Astrocyte of the cerebellum (primary cell): ENCODE measurements at regions of chr3 and their contacts with region 1.

Region 1: GRCh38 chr3:147391781-147392624 is 14.3 kb downstream of the ZIC4 start:
- DNase-seq: peak; percentile 86
- H3K4me3 ChIP-seq: peak overlapping the region; percentile 82
- CTCF ChIP-seq: peak; percentile 44

Region 2: DNA sequence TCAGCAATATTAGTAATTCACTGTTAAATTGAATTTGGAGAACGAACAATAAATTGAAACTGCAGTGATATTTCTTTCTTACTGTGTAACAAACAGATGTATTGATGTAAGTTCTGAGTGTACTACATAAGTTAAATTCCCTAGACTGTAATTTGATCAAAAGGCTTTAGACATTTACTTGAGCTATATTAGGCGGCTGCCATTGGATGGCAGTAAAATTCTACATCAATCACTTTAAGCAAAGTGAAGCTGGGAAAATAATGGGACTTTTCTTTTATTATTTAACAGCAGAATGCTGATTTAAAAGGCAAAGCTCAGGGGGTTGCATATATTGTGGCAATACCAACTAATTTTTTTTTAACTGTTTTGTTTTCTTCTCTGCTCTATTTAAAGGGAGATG is 574.3 kb before region 1 on chr3:
- in situ Hi-C with region 1: loop called (anchors 25 kb)
- DNase-seq: peak; percentile 64
- H3K4me3 ChIP-seq: no peak overlapping the region
- CTCF ChIP-seq: peak; percentile 51

Region 3: GRCh38 chr3:147462856-147463255 is 70.9 kb after region 1 on chr3:
- in situ Hi-C with region 1: no loop called
- DNase-seq: no peak
- H3K4me3 ChIP-seq: no peak overlapping the region
- CTCF ChIP-seq: no peak

Region 4: GRCh38 chr3:147744967-147745366 is 353.0 kb after region 1 on chr3:
- in situ Hi-C with region 1: no loop called
- DNase-seq: no peak
- H3K4me3 ChIP-seq: no peak overlapping the region
- CTCF ChIP-seq: no peak